CD8-positive, alpha-beta memory T cell (primary cell): ENCODE measurements at regions of chr10 and their contacts with region 1.

Region 1: GRCh38 chr10:84147347-84147746 is 8.0 kb downstream of the GHITM start:
- DNase-seq: no peak
- H3K4me3 ChIP-seq: no peak overlapping the region
- H3K4me3 Mint-ChIP-seq: no peak overlapping the region
- H3K27ac ChIP-seq: no peak overlapping the region
- H3K27ac Mint-ChIP-seq: peak overlapping the region in 2 of 8 donors; percentile 24 to 71
- H3K4me1 ChIP-seq: no peaks in the 10 kb centered on the region
- H3K4me1 Mint-ChIP-seq: peaks cover 5 to 36% (median 7%) of the 10 kb centered on the region in 3 donors
- H3K27me3 ChIP-seq: no peaks in the 10 kb centered on the region
- H3K27me3 Mint-ChIP-seq: no peaks in the 10 kb centered on the region

Region 2: DNA sequence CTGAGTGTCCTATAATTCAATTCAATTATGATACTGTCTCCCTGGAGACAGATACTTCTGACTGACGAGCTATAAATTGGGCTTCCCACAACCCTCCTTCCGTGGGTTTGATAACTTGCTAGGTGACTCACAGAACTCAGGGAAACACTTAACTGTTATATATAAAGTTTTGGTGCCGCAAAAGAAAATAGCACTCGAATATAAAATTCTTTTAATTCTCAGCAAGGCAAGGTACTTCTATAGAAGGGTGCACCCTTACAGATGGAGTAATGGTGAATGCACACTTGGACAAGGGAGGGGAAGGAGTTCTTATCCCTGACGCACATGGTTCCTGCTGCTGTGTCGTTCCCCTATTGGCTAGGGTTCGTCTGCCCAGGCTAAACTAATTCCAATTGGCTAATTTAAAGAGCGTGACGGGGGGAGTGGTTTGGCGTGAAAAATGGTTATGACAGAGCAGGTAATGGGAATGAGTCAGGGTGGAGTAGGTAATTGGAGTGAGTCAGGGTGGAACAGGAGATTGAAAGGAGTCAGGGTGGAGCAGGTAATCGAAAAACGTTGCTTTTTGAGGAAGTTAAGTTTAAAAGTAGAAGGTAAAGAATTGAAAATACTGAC is 28.8 kb before region 1 on chr10:
- CTCF ChIA-PET with region 1: no interaction called
- POLR2A ChIA-PET with region 1: no interaction called
- DNase-seq: no peak
- H3K4me3 ChIP-seq: no peak overlapping the region
- H3K4me3 Mint-ChIP-seq: no peak overlapping the region
- H3K27ac ChIP-seq: no peak overlapping the region
- H3K27ac Mint-ChIP-seq: peak overlapping the region in 1 of 8 donors; percentile 61
- H3K4me1 ChIP-seq: no peaks in the 10 kb centered on the region
- H3K4me1 Mint-ChIP-seq: no peaks in the 10 kb centered on the region
- H3K27me3 ChIP-seq: no peaks in the 10 kb centered on the region
- H3K27me3 Mint-ChIP-seq: peaks cover 11 to 26% of the 10 kb centered on the region in 2 donors

Region 3: GRCh38 chr10:84194424-84195040 is 47.2 kb after region 1 on chr10 and contains the start of gene CDHR1:
- CTCF ChIA-PET with region 1: interaction called, 11 read pairs
- POLR2A ChIA-PET with region 1: no interaction called
- DNase-seq: peak; percentile 31 to 68 (median 56)
- H3K4me3 ChIP-seq: peak within 1 kb of the TSS; percentile 43
- H3K4me3 Mint-ChIP-seq: peak within 1 kb of the TSS; percentile 71 to 90 (median 74)
- H3K27ac ChIP-seq: no peak within 1 kb of the TSS
- H3K27ac Mint-ChIP-seq: peak within 1 kb of the TSS in 6 of 8 donors; percentile 19 to 74 (median 56)
- H3K4me1 ChIP-seq: peaks cover 28% of the 10 kb centered on the region
- H3K4me1 Mint-ChIP-seq: peaks cover 14 to 37% (median 25%) of the 10 kb centered on the region in 3 donors
- H3K27me3 ChIP-seq: peaks cover 19% of the 10 kb centered on the region
- H3K27me3 Mint-ChIP-seq: peaks cover 5 to 9% of the 10 kb centered on the region in 2 donors
- total RNA-seq, gene CDHR1: 1.4 to 1.7 TPM

Region 4: DNA sequence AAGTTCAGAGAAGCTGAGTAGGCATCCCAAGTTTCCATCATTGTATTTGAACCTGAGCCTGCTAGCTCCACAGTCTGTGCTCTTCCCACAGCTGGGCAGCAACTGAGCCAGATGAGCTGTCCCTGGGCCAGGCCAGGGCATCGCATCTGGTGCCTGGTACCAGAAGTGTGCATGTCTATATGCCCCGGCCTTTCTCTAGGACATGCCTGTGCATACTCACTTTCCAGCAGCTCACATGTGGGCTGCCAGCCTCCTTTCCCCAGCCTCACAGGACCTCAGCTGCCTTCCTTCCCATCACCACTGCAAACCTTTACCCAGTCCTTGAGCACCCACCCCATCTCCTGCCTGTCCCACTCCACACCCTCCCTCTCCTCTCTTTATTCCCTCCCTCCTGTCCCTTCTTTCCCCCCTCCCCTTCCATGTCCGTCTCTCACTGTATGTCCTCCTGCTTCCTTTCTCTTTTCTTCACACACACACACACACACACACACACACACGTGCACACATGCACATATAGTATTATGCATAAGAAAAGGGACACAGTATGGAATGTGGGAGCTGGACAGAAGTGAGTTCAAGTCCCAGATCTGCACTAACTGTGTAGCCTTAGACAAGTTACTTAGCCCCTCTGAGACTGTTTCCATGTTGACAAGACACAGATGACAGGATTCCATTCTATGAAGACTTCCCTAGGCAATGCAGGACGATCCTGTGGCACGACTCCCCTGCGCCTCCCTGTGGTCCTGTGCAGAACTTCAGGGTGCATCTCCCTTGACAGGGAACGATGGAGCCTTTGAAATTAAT is 57.9 kb after region 1 on chr10:
- CTCF ChIA-PET with region 1: interaction called, 104 read pairs
- POLR2A ChIA-PET with region 1: no interaction called
- DNase-seq: peak; percentile 57 to 81 (median 65)
- H3K4me3 ChIP-seq: no peak overlapping the region
- H3K4me3 Mint-ChIP-seq: no peak overlapping the region
- H3K27ac ChIP-seq: no peak overlapping the region
- H3K27ac Mint-ChIP-seq: peak overlapping the region in 2 of 8 donors; percentile 16 to 72
- H3K4me1 ChIP-seq: no peaks in the 10 kb centered on the region
- H3K4me1 Mint-ChIP-seq: peaks cover 0 to 4% (median 2%) of the 10 kb centered on the region in 3 donors
- H3K27me3 ChIP-seq: no peaks in the 10 kb centered on the region
- H3K27me3 Mint-ChIP-seq: peaks cover 2 to 4% of the 10 kb centered on the region in 2 donors

Region 5: DNA sequence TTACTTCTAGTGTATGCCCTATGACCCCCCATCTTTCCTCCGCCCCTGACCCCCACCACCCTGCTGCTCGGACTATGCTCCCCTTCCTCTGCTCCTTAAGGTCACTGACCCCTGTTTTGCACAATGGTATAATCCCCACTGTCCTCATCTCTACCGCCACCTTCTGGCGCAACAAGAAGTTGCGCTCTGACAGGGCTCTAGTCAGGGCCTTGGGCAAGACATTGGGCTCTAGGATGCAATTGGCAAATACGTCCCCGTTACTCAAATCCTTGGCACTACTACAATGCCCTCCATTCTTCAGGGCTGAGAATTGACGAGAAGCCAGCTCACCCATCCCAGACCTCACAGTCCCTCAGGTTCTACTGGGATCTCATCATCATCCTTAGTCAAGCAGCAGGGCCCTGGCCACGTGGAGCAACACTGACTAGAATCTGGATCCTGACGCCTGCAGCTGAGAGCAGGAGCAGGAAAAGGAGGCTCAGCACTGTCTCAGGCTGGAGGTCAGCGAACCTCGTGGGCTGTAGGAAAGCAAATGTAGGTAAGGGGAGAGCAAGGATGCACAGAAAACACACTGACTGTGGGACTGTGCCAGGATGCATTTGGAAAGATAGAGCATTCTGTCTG is 67.4 kb after region 1 on chr10:
- CTCF ChIA-PET with region 1: interaction called, 39 read pairs
- POLR2A ChIA-PET with region 1: no interaction called
- DNase-seq: peak in 3 of 5 donors; percentile 13 to 56 (median 14)
- H3K4me3 ChIP-seq: no peak overlapping the region
- H3K4me3 Mint-ChIP-seq: peak overlapping the region in 4 of 7 donors; percentile 22 to 59 (median 32)
- H3K27ac ChIP-seq: no peak overlapping the region
- H3K27ac Mint-ChIP-seq: peak overlapping the region in 1 of 8 donors; percentile 94
- H3K4me1 ChIP-seq: no peaks in the 10 kb centered on the region
- H3K4me1 Mint-ChIP-seq: peaks cover 0 to 3% (median 1%) of the 10 kb centered on the region in 3 donors
- H3K27me3 ChIP-seq: no peaks in the 10 kb centered on the region
- H3K27me3 Mint-ChIP-seq: peaks cover 0 to 2% of the 10 kb centered on the region in 2 donors